Heart left ventricle (tissue), 16 donors: ENCODE measurements at regions of chr16 and their contacts with region 1.

Region 1: DNA sequence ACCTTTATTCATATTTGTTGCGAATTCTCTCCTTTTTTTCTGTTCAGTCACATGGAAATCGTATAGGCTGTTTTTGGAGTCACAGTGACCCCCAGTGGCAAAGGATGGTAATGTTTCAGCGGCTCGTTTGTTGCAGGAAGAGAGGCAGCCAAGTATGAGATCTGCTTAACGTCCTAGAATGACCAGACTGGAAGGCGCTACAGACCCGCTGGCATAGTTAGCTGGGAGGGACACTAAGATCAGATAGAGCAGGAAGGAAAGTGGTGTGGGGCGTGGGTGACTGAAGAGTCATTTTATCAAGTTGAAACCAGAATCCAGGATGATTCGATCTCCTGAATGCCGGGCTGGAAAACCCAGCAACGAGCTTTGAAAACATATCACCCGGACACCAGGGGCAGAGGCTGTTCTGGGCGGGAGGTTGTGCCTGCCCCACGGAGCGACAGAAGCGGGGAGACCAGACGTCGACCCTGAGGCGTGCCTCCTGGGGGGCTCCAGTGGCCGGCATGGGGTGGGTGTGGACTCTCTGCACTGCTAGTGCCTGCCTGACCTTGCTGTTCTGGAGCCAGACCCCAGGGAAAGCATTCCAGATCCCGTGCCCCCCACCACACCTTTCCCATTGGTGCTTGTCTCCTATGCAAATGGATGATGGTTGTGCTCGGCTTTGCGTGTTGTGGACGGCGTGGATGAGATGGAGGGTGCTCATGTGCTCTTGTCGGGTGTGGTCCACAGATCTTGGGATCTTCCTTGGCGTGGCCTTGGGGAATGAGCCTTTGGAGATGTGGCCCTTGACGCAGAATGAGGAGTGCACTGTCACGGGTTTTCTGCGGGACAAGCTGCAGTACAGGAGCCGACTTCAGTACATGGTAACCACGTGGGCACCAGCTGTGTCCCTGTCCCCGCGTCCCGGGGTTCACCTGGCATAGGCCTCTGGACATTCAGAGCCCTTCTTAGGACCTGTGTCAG is 7.7 kb downstream of the IL34 start:
- DNase-seq: peak in 4 of 5 donors; percentile 70 to 80 (median 75)
- ATAC-seq: peak; percentile 73 to 86 (median 82)
- H3K4me3 ChIP-seq: peak overlapping the region in 10 of 12 donors; percentile 7 to 44 (median 30)
- H3K27ac ChIP-seq: peak overlapping the region in 6 of 12 donors; percentile 5 to 67 (median 40)
- H3K4me1 ChIP-seq: peaks cover 0 to 8% (median 5%) of the 10 kb centered on the region in 12 donors
- H3K27me3 ChIP-seq: no peaks in the 10 kb centered on the region
- CTCF ChIP-seq: peak; percentile 80 to 95 (median 92)
- POLR2A ChIP-seq: no peak

Region 2: GRCh38 chr16:70331588-70332358 is 322.3 kb before region 1 on chr16:
- intact Hi-C with region 1: loop called in 3 of 10 experiments (anchors 5 to 10 kb)
- DNase-seq: no peak
- ATAC-seq: peak; percentile 60 to 73 (median 69)
- H3K4me3 ChIP-seq: no peak overlapping the region
- H3K27ac ChIP-seq: no peak overlapping the region
- H3K4me1 ChIP-seq: no peaks in the 10 kb centered on the region
- H3K27me3 ChIP-seq: no peaks in the 10 kb centered on the region
- CTCF ChIP-seq: peak; percentile 30 to 64 (median 46)
- POLR2A ChIP-seq: no peak

Region 3: DNA sequence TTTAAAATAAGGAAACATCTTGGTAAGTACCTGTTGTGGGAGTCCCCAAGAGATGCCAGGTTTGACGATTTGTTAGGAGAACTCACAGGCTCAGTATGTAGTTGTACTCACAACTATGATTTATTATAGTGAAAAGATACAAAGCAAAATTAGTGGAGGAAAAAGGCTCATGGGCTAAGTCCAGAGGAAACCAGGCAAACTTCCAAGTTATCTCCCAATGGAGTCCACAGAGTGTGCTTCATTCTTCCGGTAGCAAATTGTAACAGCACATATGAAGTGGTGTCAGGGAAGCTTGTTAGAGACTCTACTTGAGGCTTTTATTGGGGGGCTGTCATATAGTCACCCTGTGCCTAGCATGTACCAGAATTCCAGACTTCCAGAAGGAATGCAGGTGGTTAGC is 305.1 kb before region 1 on chr16:
- intact Hi-C with region 1: loop called in 1 of 10 experiments (anchors 10 kb)
- DNase-seq: no peak
- ATAC-seq: no peak
- H3K4me3 ChIP-seq: no peak overlapping the region
- H3K27ac ChIP-seq: peak overlapping the region in 1 of 12 donors; percentile 10
- H3K4me1 ChIP-seq: peaks cover 0 to 36% (median 30%) of the 10 kb centered on the region in 12 donors
- H3K27me3 ChIP-seq: no peaks in the 10 kb centered on the region
- CTCF ChIP-seq: no peak
- POLR2A ChIP-seq: no peak

Region 4: DNA sequence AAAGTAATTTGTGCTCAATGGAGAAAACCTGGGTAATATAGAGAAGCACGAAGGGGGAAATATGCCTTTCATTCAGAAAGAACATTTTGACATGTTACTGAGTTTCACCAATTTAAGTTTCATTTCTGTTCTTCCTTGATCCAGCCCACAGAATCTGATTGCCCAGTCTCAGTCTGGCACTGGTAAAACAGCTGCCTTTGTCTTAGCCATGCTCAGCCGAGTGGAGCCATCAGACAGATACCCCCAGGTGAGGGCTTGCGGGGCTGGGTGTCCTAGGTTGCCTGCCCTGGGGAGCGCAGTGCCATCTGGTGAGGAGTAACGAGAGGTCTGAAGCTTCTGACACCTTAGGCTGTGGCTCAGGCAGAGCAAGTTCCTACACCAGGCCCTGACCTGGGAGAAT is 289.7 kb before region 1 on chr16:
- intact Hi-C with region 1: loop called in 2 of 10 experiments (anchors 5 to 10 kb)
- DNase-seq: no peak
- ATAC-seq: no peak
- H3K4me3 ChIP-seq: no peak overlapping the region
- H3K27ac ChIP-seq: no peak overlapping the region
- H3K4me1 ChIP-seq: no peaks in the 10 kb centered on the region
- H3K27me3 ChIP-seq: no peaks in the 10 kb centered on the region
- CTCF ChIP-seq: no peak
- POLR2A ChIP-seq: no peak

Region 5: DNA sequence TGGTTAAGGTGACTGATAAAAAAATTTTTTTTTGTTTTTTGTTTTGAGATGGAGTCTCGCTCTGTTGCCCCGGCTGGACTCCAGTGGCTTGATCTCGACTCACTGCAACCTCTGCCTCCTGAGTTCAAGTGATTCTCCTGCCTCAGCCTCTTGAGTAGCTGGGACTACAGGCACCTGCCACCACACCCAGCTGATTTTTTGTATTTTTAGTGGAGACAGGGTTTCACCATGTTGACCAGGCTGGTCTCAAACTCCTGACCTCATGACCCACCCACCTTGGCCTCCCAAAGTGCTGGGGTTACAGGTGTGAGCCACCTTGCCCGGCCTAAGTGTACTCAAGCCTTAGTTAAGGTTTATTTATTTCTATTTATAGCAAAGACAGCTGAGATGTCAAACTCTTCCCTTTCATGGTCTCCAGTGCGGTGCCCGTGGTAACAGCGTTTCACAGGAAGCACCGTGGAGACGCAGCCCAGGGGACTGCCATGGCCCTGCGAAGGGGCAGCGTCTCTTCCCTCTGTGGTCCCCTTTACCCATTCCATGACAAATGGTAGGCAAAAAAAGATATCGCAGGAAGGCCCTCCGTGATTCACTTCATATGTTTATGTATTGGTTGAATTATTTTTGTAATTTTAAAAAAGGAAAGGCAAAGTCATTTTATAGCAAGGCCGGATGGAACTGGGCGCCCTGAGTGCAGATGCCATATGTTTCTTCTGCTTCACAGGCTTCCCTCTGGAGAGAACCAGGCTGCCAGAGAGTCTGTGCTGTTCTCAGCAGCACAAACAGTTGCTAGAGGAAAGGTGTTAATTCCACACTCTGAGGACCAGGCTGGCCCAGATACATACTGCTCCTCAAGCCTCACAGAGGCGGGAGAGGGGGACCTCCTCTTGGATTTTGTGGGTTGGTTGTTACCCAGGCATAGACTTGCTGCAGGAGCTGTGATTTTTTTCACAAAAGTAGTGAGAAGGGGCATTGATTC is 278.2 kb before region 1 on chr16:
- intact Hi-C with region 1: loop called in 7 of 10 experiments (anchors 5 to 10 kb)
- DNase-seq: no peak
- ATAC-seq: no peak
- H3K4me3 ChIP-seq: no peak overlapping the region
- H3K27ac ChIP-seq: no peak overlapping the region
- H3K4me1 ChIP-seq: peaks cover 0 to 20% (median 13%) of the 10 kb centered on the region in 12 donors
- H3K27me3 ChIP-seq: no peaks in the 10 kb centered on the region
- CTCF ChIP-seq: no peak
- POLR2A ChIP-seq: no peak

Region 6: GRCh38 chr16:70428178-70428998 is 225.7 kb before region 1 on chr16:
- intact Hi-C with region 1: no loop called
- DNase-seq: peak; percentile 94 to 99 (median 95)
- ATAC-seq: peak; percentile 91 to 93 (median 91)
- H3K4me3 ChIP-seq: peak overlapping the region in 3 of 12 donors; percentile 10 to 19 (median 11)
- H3K27ac ChIP-seq: peak overlapping the region; percentile 53 to 94 (median 87)
- H3K4me1 ChIP-seq: peaks cover 36 to 77% (median 61%) of the 10 kb centered on the region in 12 donors
- H3K27me3 ChIP-seq: no peaks in the 10 kb centered on the region
- CTCF ChIP-seq: no peak
- POLR2A ChIP-seq: no peak

Region 7: DNA sequence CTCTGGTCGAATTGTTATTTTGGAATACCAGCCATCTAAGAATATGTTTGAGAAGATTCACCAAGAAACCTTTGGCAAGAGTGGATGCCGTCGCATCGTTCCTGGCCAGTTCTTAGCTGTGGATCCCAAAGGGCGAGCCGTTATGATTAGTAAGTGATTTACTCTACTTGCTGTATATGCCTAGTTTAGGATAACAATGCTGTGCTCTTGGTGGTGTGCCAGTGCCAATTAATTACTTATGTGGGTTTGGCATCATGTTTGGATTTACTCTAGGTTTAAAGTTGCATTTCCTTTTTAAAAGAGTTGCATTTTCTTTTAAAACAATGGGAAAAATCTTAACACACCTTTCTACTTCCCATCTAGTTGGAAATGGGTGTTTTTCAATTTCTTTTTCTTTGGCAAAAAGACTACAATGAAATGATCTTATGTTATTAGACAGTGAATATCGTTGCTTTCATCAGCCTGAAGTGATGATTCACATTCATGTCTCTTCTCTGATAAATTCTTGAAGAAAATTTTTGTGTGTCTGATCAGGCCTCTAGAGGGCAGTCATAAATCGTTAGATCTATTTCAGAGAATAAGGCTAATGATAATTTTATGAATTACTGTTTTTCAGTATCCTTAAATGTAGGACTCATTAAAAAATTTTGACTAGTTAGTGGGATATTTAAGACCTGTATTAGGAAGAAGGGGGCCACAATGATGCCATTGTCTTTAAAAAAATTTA is 124.9 kb before region 1 on chr16:
- intact Hi-C with region 1: loop called (anchors 1 to 10 kb)
- DNase-seq: no peak
- ATAC-seq: no peak
- H3K4me3 ChIP-seq: no peak overlapping the region
- H3K27ac ChIP-seq: no peak overlapping the region
- H3K4me1 ChIP-seq: peaks cover 3 to 52% (median 35%) of the 10 kb centered on the region in 12 donors
- H3K27me3 ChIP-seq: no peaks in the 10 kb centered on the region
- CTCF ChIP-seq: peak; percentile 35 to 71 (median 53)
- POLR2A ChIP-seq: no peak

Region 8: DNA sequence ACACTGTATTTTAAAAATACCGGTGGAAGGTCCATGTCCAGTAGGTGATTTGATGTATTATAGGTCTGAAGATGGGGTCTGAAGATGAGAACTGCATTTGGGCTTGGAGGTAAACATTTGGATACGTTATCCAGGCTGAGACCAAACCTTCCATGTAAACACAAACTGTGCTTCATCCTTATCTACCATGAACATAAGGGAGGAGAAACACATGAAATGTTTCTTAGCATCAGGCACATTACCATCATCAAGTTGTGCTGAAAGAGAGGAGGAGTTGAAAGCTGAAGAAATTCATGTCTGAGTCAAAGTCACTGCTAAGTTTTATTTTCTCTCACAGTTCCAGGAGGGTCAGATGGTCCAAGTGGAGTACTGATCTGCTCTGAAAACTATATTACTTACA is 119.1 kb before region 1 on chr16:
- intact Hi-C with region 1: loop called in 5 of 10 experiments (anchors 2 to 10 kb)
- DNase-seq: no peak
- ATAC-seq: no peak
- H3K4me3 ChIP-seq: no peak overlapping the region
- H3K27ac ChIP-seq: no peak overlapping the region
- H3K4me1 ChIP-seq: peaks cover 0 to 10% (median 0%) of the 10 kb centered on the region in 12 donors
- H3K27me3 ChIP-seq: no peaks in the 10 kb centered on the region
- CTCF ChIP-seq: no peak
- POLR2A ChIP-seq: no peak

Region 9: GRCh38 chr16:70610273-70611223 is 43.5 kb before region 1 on chr16:
- intact Hi-C with region 1: no loop called
- DNase-seq: peak in 4 of 5 donors; percentile 39 to 60 (median 48)
- ATAC-seq: peak in 3 of 4 donors; percentile 36 to 59 (median 49)
- H3K4me3 ChIP-seq: no peak overlapping the region
- H3K27ac ChIP-seq: no peak overlapping the region
- H3K4me1 ChIP-seq: peaks cover 0 to 12% (median 2%) of the 10 kb centered on the region in 12 donors
- H3K27me3 ChIP-seq: no peaks in the 10 kb centered on the region
- CTCF ChIP-seq: no peak
- POLR2A ChIP-seq: no peak

Region 10: GRCh38 chr16:70715055-70715858 is 61.2 kb after region 1 on chr16:
- intact Hi-C with region 1: no loop called
- DNase-seq: peak; percentile 74 to 94 (median 87)
- ATAC-seq: peak; percentile 86 to 93 (median 90)
- H3K4me3 ChIP-seq: peak overlapping the region in 3 of 12 donors; percentile 3 to 31 (median 16)
- H3K27ac ChIP-seq: peak overlapping the region in 11 of 12 donors; percentile 60 to 93 (median 70)
- H3K4me1 ChIP-seq: peaks cover 0 to 29% (median 19%) of the 10 kb centered on the region in 12 donors
- H3K27me3 ChIP-seq: no peaks in the 10 kb centered on the region
- CTCF ChIP-seq: peak in 2 of 12 donors; percentile 8 to 12
- POLR2A ChIP-seq: no peak